ENCODE measurements at regions of chr17 and their contacts with region 1.

Region 1: DNA sequence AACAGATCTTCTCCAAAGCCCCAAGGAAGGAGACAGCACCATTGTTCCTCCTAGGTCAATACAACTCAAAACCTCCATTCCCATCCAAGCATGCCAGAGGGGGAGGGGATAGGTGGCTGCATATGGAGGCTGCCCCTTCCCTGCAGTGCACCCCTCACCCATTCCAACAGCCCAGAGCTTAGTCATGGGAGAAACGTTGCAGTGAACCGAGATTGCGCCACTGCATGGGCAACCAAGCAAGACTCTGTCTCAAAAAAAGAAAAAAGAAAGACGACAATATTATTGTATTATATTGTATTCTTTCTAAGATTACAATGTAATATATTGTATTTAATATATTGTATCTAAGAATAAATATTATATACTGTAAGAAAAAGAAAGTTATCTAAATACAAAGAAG is 36.4 kb upstream of the CD300E start:
- DNase-seq: no peak
- ATAC-seq: no peak
- H3K4me3 ChIP-seq: no peak overlapping the region
- H3K4me3 Mint-ChIP-seq: no peak overlapping the region
- H3K27ac ChIP-seq: no peak overlapping the region
- H3K27ac Mint-ChIP-seq: peak overlapping the region in 1 of 9 donors; percentile 32
- H3K4me1 ChIP-seq: peaks cover 0 to 3% of the 10 kb centered on the region in 2 donors
- H3K4me1 Mint-ChIP-seq: peaks cover 4 to 9% (median 6%) of the 10 kb centered on the region in 7 donors
- H3K27me3 ChIP-seq: peaks cover 0 to 3% of the 10 kb centered on the region in 2 donors
- H3K27me3 Mint-ChIP-seq: peaks cover 29 to 78% (median 36%) of the 10 kb centered on the region in 5 donors

Region 2: DNA sequence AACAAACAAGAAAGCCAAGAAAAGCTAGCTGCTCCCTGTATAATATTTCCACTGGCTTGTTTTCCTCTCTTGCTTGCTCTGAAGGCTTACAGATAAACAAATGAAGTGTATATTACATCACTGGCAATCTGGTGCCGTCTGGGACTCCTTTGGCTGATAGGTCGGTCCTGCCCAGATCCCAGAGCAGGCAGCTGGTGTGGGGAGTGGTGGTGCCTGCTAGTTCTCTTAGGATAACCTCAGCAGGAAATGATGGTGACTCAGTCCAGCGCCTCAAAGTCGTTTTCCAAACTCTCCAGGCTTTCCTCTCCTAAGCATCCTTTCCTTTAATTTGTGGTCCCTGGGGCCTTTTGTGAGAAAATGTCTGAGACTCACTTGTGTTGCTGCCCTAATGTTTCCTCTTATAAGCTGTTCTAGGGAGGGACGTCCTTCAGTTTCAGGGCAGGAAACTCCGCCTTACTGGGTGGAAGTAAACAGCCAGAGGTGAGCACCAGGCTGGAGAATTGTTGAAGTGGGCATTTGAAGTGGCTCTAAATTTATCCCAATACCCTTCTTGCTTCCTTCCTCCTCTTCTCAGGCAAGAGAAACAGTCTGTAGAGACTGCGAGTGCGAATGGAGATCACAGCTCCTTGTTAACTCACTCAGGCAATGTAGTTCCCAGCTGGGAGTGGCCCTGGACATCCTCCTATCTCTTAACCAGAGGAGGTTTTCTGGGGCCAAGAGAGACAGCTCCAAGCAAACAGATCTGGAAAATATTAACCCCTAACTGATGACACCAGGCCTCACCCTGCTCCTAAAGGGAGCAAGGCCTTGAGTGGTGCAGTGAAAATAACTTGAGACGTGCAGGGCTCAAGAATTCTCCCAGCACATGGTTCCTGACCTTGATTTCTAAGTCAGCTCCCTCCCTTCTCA is 17.9 kb after region 1 on chr17:
- CTCF ChIA-PET with region 1: interaction called, 12 read pairs
- POLR2A ChIA-PET with region 1: interaction called, 6 read pairs
- intact Hi-C with region 1: no loop called
- DNase-seq: peak in 4 of 9 donors; percentile 6 to 25 (median 11)
- ATAC-seq: peak; percentile 46
- H3K4me3 ChIP-seq: no peak overlapping the region
- H3K4me3 Mint-ChIP-seq: peak overlapping the region; percentile 1 to 76 (median 46)
- H3K27ac ChIP-seq: no peak overlapping the region
- H3K27ac Mint-ChIP-seq: peak overlapping the region; percentile 51 to 84 (median 67)
- H3K4me1 ChIP-seq: peaks cover 6 to 15% of the 10 kb centered on the region in 2 donors
- H3K4me1 Mint-ChIP-seq: peaks cover 16 to 28% (median 23%) of the 10 kb centered on the region in 7 donors
- H3K27me3 ChIP-seq: peaks cover 2 to 3% of the 10 kb centered on the region in 2 donors
- H3K27me3 Mint-ChIP-seq: peaks cover 14 to 66% (median 19%) of the 10 kb centered on the region in 5 donors

Region 3: DNA sequence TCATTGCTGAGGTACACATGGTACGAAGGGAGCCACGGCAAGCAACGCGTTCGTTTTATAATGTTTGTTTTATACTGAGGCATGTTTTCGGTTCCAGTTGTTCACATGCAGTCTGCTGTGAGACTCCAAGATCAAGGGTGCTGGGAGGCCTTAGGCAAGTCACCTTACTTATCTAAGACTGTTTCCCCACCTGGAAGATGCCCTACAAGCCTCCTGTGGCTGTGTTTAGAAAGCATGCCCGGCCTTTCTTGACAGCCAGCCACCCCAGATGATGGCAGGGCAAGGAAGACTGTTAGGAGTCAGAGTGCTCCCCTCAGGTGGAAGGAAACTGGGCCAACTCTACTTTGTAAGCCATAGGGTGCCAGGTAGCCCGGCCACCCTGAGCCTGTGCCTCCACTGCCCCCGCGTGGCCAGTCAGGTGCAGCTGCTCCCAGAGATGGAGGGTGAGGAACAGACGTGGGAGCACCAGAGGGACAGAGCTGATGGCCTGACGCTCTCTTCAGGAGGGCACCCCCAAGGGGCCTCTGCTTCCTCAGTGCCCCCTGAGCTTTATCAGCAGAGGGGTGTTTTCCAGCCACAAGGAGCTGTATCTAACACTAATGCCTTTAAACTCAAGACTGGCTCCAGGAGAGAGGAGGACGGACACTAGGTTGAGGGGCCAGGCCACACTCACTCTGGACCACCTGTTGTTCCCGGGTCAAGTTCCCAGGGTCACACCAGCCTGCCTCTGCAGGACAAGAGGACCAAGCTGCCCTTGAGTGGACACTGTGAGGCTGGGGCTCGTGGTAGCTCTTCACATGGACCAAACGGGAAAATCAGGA is 110.8 kb after region 1 on chr17:
- CTCF ChIA-PET with region 1: interaction called, 74 read pairs
- POLR2A ChIA-PET with region 1: interaction called, 3 read pairs
- intact Hi-C with region 1: loop called (anchors 1 kb)
- DNase-seq: peak; percentile 66 to 82 (median 78)
- ATAC-seq: peak; percentile 95
- H3K4me3 ChIP-seq: no peak overlapping the region
- H3K4me3 Mint-ChIP-seq: peak overlapping the region in 2 of 10 donors; percentile 16 to 21
- H3K27ac ChIP-seq: peak overlapping the region; percentile 4
- H3K27ac Mint-ChIP-seq: peak overlapping the region; percentile 42 to 92 (median 76)
- H3K4me1 ChIP-seq: peaks cover 9 to 17% of the 10 kb centered on the region in 2 donors
- H3K4me1 Mint-ChIP-seq: peaks cover 10 to 46% (median 38%) of the 10 kb centered on the region in 7 donors
- H3K27me3 ChIP-seq: no peaks in the 10 kb centered on the region
- H3K27me3 Mint-ChIP-seq: no peaks in the 10 kb centered on the region

Region 4: DNA sequence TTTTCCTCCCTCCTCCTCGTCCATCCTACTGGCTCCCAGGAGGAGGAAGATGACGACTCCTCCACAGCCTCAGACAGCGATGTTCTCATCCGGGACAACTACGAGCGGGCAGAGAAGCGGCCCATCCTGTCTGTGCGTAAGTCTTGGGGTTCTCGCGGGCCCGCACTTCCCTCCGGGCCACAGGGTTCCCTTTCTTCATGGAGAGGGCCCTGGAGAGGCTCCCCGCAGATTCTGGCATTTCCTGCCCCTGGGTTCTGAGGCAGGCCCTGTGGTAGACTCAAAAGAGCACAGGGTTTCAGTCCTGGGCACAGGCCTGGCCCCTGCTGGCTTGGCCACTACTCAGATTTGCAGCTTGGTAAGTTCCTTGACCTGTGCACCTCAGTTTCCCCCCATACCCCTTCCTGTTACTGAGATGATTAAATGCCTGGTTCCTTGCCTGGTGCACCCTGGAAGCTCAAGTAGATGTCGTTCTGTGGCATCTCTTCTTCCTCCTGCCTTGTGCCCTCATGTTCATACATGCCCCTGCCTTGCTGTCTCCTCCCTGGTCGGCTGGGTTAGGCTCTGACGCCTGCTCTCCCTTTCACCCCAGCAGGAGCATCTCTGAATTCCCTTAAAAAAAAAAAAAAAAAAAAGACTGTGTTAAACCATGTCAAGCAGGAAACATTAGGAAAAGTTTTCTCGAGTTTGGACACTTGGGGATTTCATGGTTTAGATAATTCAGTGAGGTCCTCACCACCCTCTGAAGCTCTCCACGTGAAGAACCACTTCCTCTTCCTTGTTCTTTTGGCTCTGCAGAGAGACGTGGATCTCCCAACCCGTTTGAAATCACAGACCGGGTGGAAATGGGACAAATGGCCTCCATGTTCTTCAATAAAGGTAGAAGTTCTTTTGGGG is 130.5 kb after region 1 on chr17:
- CTCF ChIA-PET with region 1: interaction called, 26 read pairs
- POLR2A ChIA-PET with region 1: no interaction called
- intact Hi-C with region 1: loop called in 1 of 2 experiments (anchors 1 kb)
- DNase-seq: peak in 2 of 9 donors; percentile 24
- ATAC-seq: no peak
- H3K4me3 ChIP-seq: no peak overlapping the region
- H3K4me3 Mint-ChIP-seq: peak overlapping the region; percentile 41 to 81 (median 72)
- H3K27ac ChIP-seq: peak overlapping the region; percentile 19
- H3K27ac Mint-ChIP-seq: peak overlapping the region; percentile 48 to 88 (median 81)
- H3K4me1 ChIP-seq: peaks cover 13 to 39% of the 10 kb centered on the region in 2 donors
- H3K4me1 Mint-ChIP-seq: peaks cover 28 to 64% (median 46%) of the 10 kb centered on the region in 7 donors
- H3K27me3 ChIP-seq: no peaks in the 10 kb centered on the region
- H3K27me3 Mint-ChIP-seq: no peaks in the 10 kb centered on the region

Region 5: GRCh38 chr17:74864866-74865395 is 205.0 kb after region 1 on chr17:
- CTCF ChIA-PET with region 1: interaction called, 13 read pairs
- POLR2A ChIA-PET with region 1: no interaction called
- intact Hi-C with region 1: loop called (anchors 1 kb)
- DNase-seq: peak; percentile 35 to 73 (median 59)
- ATAC-seq: peak; percentile 74
- H3K4me3 ChIP-seq: no peak overlapping the region
- H3K4me3 Mint-ChIP-seq: peak overlapping the region in 1 of 10 donors; percentile 35
- H3K27ac ChIP-seq: no peak overlapping the region
- H3K27ac Mint-ChIP-seq: peak overlapping the region in 2 of 9 donors; percentile 16 to 47
- H3K4me1 ChIP-seq: peaks cover 12 to 14% of the 10 kb centered on the region in 2 donors
- H3K4me1 Mint-ChIP-seq: peaks cover 0 to 23% (median 16%) of the 10 kb centered on the region in 7 donors
- H3K27me3 ChIP-seq: peaks cover 4 to 7% of the 10 kb centered on the region in 2 donors
- H3K27me3 Mint-ChIP-seq: peaks cover 3 to 24% (median 11%) of the 10 kb centered on the region in 5 donors